ENCODE measurements at regions of chr2 and their contacts with region 1.

Region 1: DNA sequence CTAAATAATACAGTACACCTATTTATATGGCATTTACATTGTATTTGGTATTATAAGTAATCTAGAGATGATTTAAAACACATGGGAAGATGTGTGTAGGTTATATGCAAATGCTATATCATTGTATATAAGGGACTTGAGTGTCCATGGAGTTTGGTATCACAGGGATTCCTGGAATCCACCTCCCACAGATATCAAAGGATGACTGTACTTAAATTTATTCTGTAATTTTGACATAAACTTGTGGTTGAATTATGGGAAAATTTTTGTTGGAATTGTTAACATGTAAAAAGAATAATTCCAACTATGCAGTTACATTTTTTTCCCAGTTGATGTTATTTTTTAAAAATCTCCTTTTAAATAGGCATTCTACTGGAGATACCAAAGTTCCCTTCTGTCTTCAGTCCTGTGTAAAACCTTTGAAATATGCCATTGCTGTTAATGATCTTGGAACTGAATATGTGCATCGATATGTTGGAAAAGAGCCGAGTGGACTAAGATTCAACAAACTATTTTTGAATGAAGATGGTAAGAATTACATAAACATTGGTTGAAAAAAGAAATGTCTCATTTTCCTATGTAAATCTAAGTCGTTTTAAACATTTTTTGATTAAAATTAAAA is 24.1 kb downstream of the GLS start:
- DNase-seq: no peak
- ATAC-seq: no peak
- H3K4me3 ChIP-seq: no peak overlapping the region
- H3K4me3 Mint-ChIP-seq: no peak overlapping the region
- H3K27ac ChIP-seq: no peak overlapping the region
- H3K27ac Mint-ChIP-seq: no peak overlapping the region
- H3K4me1 ChIP-seq: no peaks in the 10 kb centered on the region
- H3K4me1 Mint-ChIP-seq: peaks cover 20% of the 10 kb centered on the region
- H3K27me3 ChIP-seq: no peaks in the 10 kb centered on the region
- H3K27me3 Mint-ChIP-seq: no peaks in the 10 kb centered on the region
- CTCF ChIP-seq: no peak

Region 2: GRCh38 chr2:190887089-190887488 is 17.7 kb before region 1 on chr2:
- CTCF ChIA-PET with region 1: interaction called, 3 read pairs
- POLR2A ChIA-PET with region 1: interaction called, 5 read pairs
- intact Hi-C with region 1: loop called in 1 of 2 experiments (anchors 2 kb)
- DNase-seq: peak in 2 of 9 experiments; percentile 19 to 29
- ATAC-seq: peak; percentile 14
- H3K4me3 ChIP-seq: no peak overlapping the region
- H3K4me3 Mint-ChIP-seq: no peak overlapping the region
- H3K27ac ChIP-seq: peak overlapping the region in 1 of 2 experiments; percentile 36
- H3K27ac Mint-ChIP-seq: peak overlapping the region; percentile 8
- H3K4me1 ChIP-seq: peaks cover 79% of the 10 kb centered on the region
- H3K4me1 Mint-ChIP-seq: peaks cover 83% of the 10 kb centered on the region
- H3K27me3 ChIP-seq: no peaks in the 10 kb centered on the region
- H3K27me3 Mint-ChIP-seq: no peaks in the 10 kb centered on the region
- CTCF ChIP-seq: no peak

Region 3: DNA sequence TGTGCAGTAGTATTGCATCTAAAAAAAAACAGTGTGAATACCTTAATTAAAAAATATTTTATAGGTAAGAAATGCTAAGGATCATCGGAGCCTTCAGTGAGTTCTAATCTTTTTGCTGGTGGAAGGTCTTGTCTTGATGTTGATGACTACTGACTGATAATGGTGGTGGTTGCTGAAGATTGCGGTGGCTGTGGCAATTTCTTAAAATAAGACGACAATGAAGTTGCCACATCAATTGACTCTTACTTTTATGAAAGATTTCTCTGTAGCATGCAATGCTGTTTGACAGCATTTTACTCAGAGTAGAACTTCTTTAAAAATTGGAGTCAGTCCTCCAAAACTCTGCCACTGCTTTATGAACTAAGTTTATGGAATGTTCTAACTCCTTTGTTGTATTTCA is 12.1 kb after region 1 on chr2:
- CTCF ChIA-PET with region 1: no interaction called
- POLR2A ChIA-PET with region 1: no interaction called
- intact Hi-C with region 1: loop called (anchors 2 kb)
- DNase-seq: peak in 4 of 9 experiments; percentile 23 to 45 (median 32)
- ATAC-seq: peak; percentile 71
- H3K4me3 ChIP-seq: no peak overlapping the region
- H3K4me3 Mint-ChIP-seq: no peak overlapping the region
- H3K27ac ChIP-seq: no peak overlapping the region
- H3K27ac Mint-ChIP-seq: peak overlapping the region; percentile 49
- H3K4me1 ChIP-seq: peaks cover 12% of the 10 kb centered on the region
- H3K4me1 Mint-ChIP-seq: peaks cover 44% of the 10 kb centered on the region
- H3K27me3 ChIP-seq: no peaks in the 10 kb centered on the region
- H3K27me3 Mint-ChIP-seq: no peaks in the 10 kb centered on the region
- CTCF ChIP-seq: no peak

Region 4: GRCh38 chr2:190961918-190962487 is 57.3 kb after region 1 on chr2:
- CTCF ChIA-PET with region 1: interaction called, 3 read pairs
- POLR2A ChIA-PET with region 1: no interaction called
- intact Hi-C with region 1: loop called in 1 of 2 experiments (anchors 5 kb)
- DNase-seq: no peak
- ATAC-seq: peak; percentile 20
- H3K4me3 ChIP-seq: no peak overlapping the region
- H3K4me3 Mint-ChIP-seq: no peak overlapping the region
- H3K27ac ChIP-seq: peak overlapping the region in 1 of 2 experiments; percentile 14
- H3K27ac Mint-ChIP-seq: peak overlapping the region; percentile 63
- H3K4me1 ChIP-seq: no peaks in the 10 kb centered on the region
- H3K4me1 Mint-ChIP-seq: peaks cover 39% of the 10 kb centered on the region
- H3K27me3 ChIP-seq: no peaks in the 10 kb centered on the region
- H3K27me3 Mint-ChIP-seq: no peaks in the 10 kb centered on the region
- CTCF ChIP-seq: no peak

Measured in CD8-positive, alpha-beta T cell (primary cell).